Testis (tissue), 5 donors: ENCODE measurements at regions of chr20 and their contacts with region 1.

Region 1: GRCh38 chr20:52083627-52084232 is 107.8 kb downstream of the ZFP64 start:
- DNase-seq: peak; percentile 82
- H3K4me3 ChIP-seq: no peak overlapping the region
- H3K27ac ChIP-seq: no peak overlapping the region
- H3K4me1 ChIP-seq: no peaks in the 10 kb centered on the region
- H3K27me3 ChIP-seq: no peaks in the 10 kb centered on the region
- CTCF ChIP-seq: peak; percentile 29 to 53 (median 35)
- POLR2A ChIP-seq: no peak

Region 2: GRCh38 chr20:51639206-51639832 is 444.4 kb before region 1 on chr20:
- intact Hi-C with region 1: loop called (anchors 10 kb)
- DNase-seq: peak; percentile 82
- H3K4me3 ChIP-seq: no peak overlapping the region
- H3K27ac ChIP-seq: no peak overlapping the region
- H3K4me1 ChIP-seq: no peaks in the 10 kb centered on the region
- H3K27me3 ChIP-seq: no peaks in the 10 kb centered on the region
- CTCF ChIP-seq: peak; percentile 66 to 77 (median 76)
- POLR2A ChIP-seq: no peak

Region 3: GRCh38 chr20:51811042-51811355 is 272.7 kb before region 1 on chr20:
- intact Hi-C with region 1: no loop called
- DNase-seq: no peak
- H3K4me3 ChIP-seq: no peak overlapping the region
- H3K27ac ChIP-seq: no peak overlapping the region
- H3K4me1 ChIP-seq: no peaks in the 10 kb centered on the region
- H3K27me3 ChIP-seq: no peaks in the 10 kb centered on the region
- CTCF ChIP-seq: no peak
- POLR2A ChIP-seq: no peak

Region 4: GRCh38 chr20:52033301-52033700 is 50.4 kb before region 1 on chr20:
- intact Hi-C with region 1: no loop called
- DNase-seq: no peak
- H3K4me3 ChIP-seq: no peak overlapping the region
- H3K27ac ChIP-seq: no peak overlapping the region
- H3K4me1 ChIP-seq: peaks cover 3% of the 10 kb centered on the region
- H3K27me3 ChIP-seq: no peaks in the 10 kb centered on the region
- CTCF ChIP-seq: no peak
- POLR2A ChIP-seq: no peak